ENCODE measurements at regions of chr9 and their contacts with region 1.

Region 1: GRCh38 chr9:122350638-122351355 is 20.0 kb upstream of the PTGS1 start:
- DNase-seq: peak; percentile 75
- H3K4me3 ChIP-seq: no peak overlapping the region
- H3K27ac ChIP-seq: no peak overlapping the region
- H3K4me1 ChIP-seq: no peaks in the 10 kb centered on the region
- H3K27me3 ChIP-seq: peaks cover 43% of the 10 kb centered on the region
- CTCF ChIP-seq: peak; percentile 96

Region 2: DNA sequence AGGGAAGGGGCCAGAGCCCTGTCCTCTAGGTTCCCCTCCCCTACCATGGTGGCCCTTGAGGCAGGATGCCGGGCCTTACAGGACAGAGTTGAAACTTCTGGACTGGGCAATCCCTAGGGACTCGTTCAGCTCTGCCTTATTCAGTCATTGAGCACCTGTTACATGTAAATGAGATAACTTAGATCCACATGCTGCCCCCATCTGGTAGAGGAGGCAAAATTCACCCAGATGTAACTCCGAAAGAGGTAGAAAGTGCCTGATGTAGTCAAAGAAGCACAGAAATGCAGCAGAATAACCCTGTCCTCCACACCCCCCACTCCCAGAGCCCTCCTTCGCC is 852.7 kb before region 1 on chr9:
- CTCF ChIA-PET with region 1: interaction called, 17 read pairs
- POLR2A ChIA-PET with region 1: no interaction called
- intact Hi-C with region 1: no loop called
- DNase-seq: peak; percentile 91
- H3K4me3 ChIP-seq: peak overlapping the region; percentile 49
- H3K27ac ChIP-seq: no peak overlapping the region
- H3K4me1 ChIP-seq: peaks cover 13% of the 10 kb centered on the region
- H3K27me3 ChIP-seq: peaks cover 23% of the 10 kb centered on the region
- CTCF ChIP-seq: peak; percentile 84

Region 3: GRCh38 chr9:122125158-122125508 is 225.7 kb before region 1 on chr9:
- CTCF ChIA-PET with region 1: interaction called, 53 read pairs
- POLR2A ChIA-PET with region 1: interaction called, 3 read pairs
- intact Hi-C with region 1: loop called (anchors 1 kb)
- DNase-seq: peak; percentile 79
- H3K4me3 ChIP-seq: no peak overlapping the region
- H3K27ac ChIP-seq: no peak overlapping the region
- H3K4me1 ChIP-seq: peaks cover 11% of the 10 kb centered on the region
- H3K27me3 ChIP-seq: peaks cover 11% of the 10 kb centered on the region
- CTCF ChIP-seq: peak; percentile 92

Region 4: GRCh38 chr9:122810306-122810946 is 459.6 kb after region 1 on chr9:
- CTCF ChIA-PET with region 1: no interaction called
- POLR2A ChIA-PET with region 1: no interaction called
- intact Hi-C with region 1: loop called (anchors 10 kb)
- DNase-seq: peak; percentile 86
- H3K4me3 ChIP-seq: no peak overlapping the region
- H3K27ac ChIP-seq: no peak overlapping the region
- H3K4me1 ChIP-seq: no peaks in the 10 kb centered on the region
- H3K27me3 ChIP-seq: no peaks in the 10 kb centered on the region
- CTCF ChIP-seq: peak; percentile 82

Measured in A673 (cell line).